WTC11 (cell line): ENCODE measurements at regions of chr19 and their contacts with region 1.

Region 1: DNA sequence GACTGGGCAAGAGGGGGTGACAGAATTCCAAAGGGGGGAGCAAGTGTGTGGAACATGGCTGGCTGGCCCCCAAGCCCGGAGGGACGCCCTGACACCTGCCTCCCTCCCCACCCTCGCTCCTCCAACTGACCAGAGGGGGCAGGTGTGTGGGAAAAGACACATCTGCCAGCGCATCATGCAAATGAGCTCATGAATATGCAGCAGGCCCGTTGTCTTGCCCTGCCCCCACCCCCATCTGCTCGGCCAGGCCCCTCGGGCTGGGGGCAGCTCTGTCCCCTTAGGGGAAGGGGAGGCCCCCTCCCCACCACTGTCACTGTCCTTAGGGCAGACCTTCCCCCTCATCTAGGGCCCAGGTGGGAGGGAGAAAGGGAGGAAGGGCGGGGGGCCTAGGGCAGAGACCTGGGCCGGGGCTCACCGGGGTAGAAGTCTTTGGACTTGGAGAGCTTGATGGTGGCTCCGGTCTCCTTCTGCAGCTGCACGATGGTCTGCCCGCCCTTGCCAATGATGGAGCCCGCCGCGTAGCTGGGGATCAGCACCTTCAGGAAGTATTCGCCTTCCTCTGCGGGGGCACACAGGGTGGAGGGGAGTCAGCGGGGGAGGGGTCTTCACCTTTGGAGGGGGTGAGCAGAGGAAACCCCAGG is 12.9 kb downstream of the NOVA2 start:
- DNase-seq: peak; percentile 82
- ATAC-seq: peak; percentile 97
- H3K4me3 Mint-ChIP-seq: peak overlapping the region; percentile 14
- H3K27ac Mint-ChIP-seq: 0 out of 2 replicates have a peak overlapping the region, but pooled peaks have one; percentile 6
- H3K4me1 Mint-ChIP-seq: peaks cover 13% of the 10 kb centered on the region
- H3K27me3 Mint-ChIP-seq: peaks cover 78% of the 10 kb centered on the region
- CTCF ChIP-seq: no peak

Region 2: GRCh38 chr19:45902651-45903625 is 57.8 kb before region 1 on chr19:
- CTCF ChIA-PET with region 1: interaction called, 21 read pairs
- POLR2A ChIA-PET with region 1: no interaction called
- DNase-seq: peak; percentile 99
- ATAC-seq: peak; percentile 84
- H3K4me3 Mint-ChIP-seq: peak overlapping the region; percentile 91
- H3K27ac Mint-ChIP-seq: peak overlapping the region; percentile 57; the same call in 1 of the 2 replicates
- H3K4me1 Mint-ChIP-seq: peaks cover 12% of the 10 kb centered on the region
- H3K27me3 Mint-ChIP-seq: peaks cover 25% of the 10 kb centered on the region
- CTCF ChIP-seq: no peak

Region 3: GRCh38 chr19:45922281-45922680 is 38.4 kb before region 1 on chr19:
- CTCF ChIA-PET with region 1: interaction called, 17 read pairs
- POLR2A ChIA-PET with region 1: no interaction called
- DNase-seq: peak; percentile 61
- ATAC-seq: peak; percentile 97
- H3K4me3 Mint-ChIP-seq: no peak overlapping the region
- H3K27ac Mint-ChIP-seq: no peak overlapping the region
- H3K4me1 Mint-ChIP-seq: peaks cover 2% of the 10 kb centered on the region; the same call in 1 of the 2 replicates
- H3K27me3 Mint-ChIP-seq: peaks cover 16% of the 10 kb centered on the region
- CTCF ChIP-seq: peak; percentile 38; the same call in 1 of the 2 replicates

Region 4: GRCh38 chr19:45939792-45940514 is 20.8 kb before region 1 on chr19:
- CTCF ChIA-PET with region 1: interaction called, 11 read pairs
- POLR2A ChIA-PET with region 1: interaction called, 4 read pairs
- DNase-seq: no peak
- ATAC-seq: peak; percentile 50
- H3K4me3 Mint-ChIP-seq: peak overlapping the region; percentile 60
- H3K27ac Mint-ChIP-seq: no peak overlapping the region
- H3K4me1 Mint-ChIP-seq: peaks cover 13% of the 10 kb centered on the region; the same call in 1 of the 2 replicates
- H3K27me3 Mint-ChIP-seq: peaks cover 32% of the 10 kb centered on the region
- CTCF ChIP-seq: no peak

Region 5: DNA sequence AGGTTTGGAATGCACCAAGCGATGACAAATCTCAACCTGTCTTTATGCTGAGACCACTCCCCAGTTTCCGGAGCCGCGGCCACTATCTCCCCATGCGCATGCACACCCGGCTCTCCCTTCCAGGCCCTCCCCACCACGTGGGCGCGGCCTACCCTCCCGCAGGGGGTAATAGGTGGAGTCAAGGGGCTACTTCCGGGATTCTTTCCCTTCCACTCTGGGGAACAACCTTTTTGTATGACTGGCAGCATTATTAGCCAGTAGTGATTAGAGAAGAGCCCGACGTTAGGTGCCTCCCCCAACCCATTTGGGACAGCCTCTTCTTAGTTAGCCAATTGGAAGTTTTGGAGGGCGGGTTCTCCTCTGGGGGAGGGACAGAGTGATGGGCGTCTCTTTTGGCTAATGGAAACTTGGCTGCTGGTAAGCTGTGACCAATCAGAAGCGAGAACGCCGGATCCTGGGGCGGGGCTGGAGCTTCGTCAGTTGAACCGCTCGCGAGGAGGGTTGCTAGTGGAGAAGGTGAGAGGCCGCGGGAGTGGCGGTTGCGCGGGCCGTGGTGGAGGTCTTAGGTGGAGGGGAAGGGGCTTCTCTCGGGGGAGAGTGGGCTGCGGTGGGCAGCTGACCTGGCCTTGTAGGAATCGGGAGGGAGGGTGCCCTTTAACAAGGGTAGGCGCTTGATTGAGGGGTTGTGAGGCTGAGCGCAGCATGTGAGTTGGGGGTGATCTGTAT is 34.4 kb after region 1 on chr19 and contains the start of gene CCDC61:
- CTCF ChIA-PET with region 1: interaction called, 19 read pairs
- POLR2A ChIA-PET with region 1: interaction called, 3 read pairs
- DNase-seq: peak; percentile 97
- ATAC-seq: peak; percentile 96
- H3K4me3 Mint-ChIP-seq: no peak within 1 kb of the TSS
- H3K27ac Mint-ChIP-seq: peak within 1 kb of the TSS; percentile 34
- H3K4me1 Mint-ChIP-seq: peaks cover 16% of the 10 kb centered on the region
- H3K27me3 Mint-ChIP-seq: peaks cover 12% of the 10 kb centered on the region; the same call in 1 of the 2 replicates
- CTCF ChIP-seq: no peak
- total RNA-seq, gene CCDC61: 25.2 to 33.7 TPM (median 26.6 TPM) in 3 replicates

Region 6: DNA sequence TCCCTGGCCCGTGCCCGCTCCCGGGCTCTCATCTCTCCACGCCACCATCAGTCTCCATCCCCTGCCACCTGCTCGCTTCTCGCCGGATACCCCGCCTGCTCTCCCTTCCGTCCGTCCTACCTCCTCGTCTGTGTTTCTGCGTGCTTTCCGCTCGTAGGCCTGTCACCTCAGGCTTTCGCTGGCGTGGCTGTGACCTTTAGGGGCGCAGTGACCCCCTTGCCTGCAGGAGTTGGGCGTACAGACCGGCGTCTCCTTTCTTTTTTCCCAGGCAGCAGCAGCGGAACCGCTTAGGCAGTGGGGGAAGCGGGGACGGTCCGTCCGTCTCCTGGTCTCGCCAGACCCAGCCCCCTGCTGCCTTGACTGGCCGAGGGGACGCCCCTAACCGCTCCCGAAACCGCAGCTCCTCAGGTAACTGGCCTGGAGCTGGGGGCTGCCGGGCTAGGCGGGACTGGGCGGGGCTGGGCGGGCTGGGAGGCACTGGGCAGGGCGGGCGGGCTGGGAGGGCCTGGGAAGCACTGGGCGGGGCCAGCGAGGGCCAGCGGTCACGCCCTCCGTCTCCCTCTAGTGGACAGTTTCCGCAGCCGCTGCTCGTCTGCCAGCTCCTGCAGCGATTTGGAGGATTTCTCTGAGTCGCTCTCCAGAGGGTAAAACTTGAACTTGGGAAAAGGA is 55.8 kb after region 1 on chr19:
- CTCF ChIA-PET with region 1: interaction called, 22 read pairs
- POLR2A ChIA-PET with region 1: interaction called, 3 read pairs
- DNase-seq: peak; percentile 89
- ATAC-seq: peak; percentile 66
- H3K4me3 Mint-ChIP-seq: peak overlapping the region; percentile 87
- H3K27ac Mint-ChIP-seq: peak overlapping the region; percentile 45; the same call in 1 of the 2 replicates
- H3K4me1 Mint-ChIP-seq: peaks cover 21% of the 10 kb centered on the region
- H3K27me3 Mint-ChIP-seq: peaks cover 31% of the 10 kb centered on the region
- CTCF ChIP-seq: peak; percentile 81